Right ventricle myocardium inferior (tissue), 1 donor: ENCODE measurements at regions of chr10 and their contacts with region 1.

Region 1: GRCh38 chr10:110918643-110919363 is at the start of gene BBIP1:
- DNase-seq: no peak
- ATAC-seq: peak; percentile 97
- total RNA-seq, gene BBIP1: 19.0 TPM

Region 2: GRCh38 chr10:109427411-109427810 is 1491.4 kb before region 1 on chr10:
- intact Hi-C with region 1: no loop called
- DNase-seq: no peak
- ATAC-seq: no peak

Region 3: DNA sequence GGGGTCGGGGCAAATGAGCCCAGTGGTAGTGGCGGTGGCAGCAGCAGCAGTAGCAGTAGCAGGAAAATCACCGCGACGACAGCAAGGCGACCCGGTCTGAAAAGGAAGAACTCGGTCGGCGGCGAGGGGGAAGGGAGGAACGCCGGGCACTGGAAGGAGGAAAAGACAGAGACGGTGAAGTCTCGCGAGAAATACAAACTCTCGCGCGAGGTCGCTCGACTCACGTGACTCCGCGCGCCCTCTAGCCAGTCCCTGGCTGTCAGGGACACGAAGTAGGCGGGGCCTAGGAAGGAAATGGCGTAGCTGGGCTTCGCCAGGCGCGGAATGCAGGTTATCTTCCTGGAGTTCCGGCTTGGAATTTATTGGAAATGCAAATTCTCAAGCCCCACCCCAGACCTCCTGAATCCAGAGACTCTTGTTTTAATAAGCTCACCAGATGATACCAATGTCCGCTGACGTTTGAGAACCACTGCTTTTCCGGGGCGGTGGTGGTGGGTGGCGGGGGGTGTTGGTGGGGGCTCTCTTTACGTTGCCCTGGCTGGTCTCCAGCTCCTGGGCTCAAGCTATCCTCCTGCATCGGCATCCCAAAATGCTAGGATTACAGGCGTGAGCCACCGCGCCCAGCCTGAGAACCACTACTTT is 613.9 kb before region 1 on chr10 and contains the start of gene SMNDC1:
- intact Hi-C with region 1: loop called (anchors 10 kb)
- DNase-seq: peak; percentile 98
- ATAC-seq: peak; percentile 96
- total RNA-seq, gene SMNDC1: 27.6 TPM

Region 4: GRCh38 chr10:110871298-110872084 is 47.3 kb before region 1 on chr10 and contains the start of gene PDCD4:
- intact Hi-C with region 1: loop called (anchors 2 kb)
- DNase-seq: peak; percentile 100
- ATAC-seq: peak; percentile 96
- total RNA-seq, gene PDCD4: 71.6 TPM

Region 5: DNA sequence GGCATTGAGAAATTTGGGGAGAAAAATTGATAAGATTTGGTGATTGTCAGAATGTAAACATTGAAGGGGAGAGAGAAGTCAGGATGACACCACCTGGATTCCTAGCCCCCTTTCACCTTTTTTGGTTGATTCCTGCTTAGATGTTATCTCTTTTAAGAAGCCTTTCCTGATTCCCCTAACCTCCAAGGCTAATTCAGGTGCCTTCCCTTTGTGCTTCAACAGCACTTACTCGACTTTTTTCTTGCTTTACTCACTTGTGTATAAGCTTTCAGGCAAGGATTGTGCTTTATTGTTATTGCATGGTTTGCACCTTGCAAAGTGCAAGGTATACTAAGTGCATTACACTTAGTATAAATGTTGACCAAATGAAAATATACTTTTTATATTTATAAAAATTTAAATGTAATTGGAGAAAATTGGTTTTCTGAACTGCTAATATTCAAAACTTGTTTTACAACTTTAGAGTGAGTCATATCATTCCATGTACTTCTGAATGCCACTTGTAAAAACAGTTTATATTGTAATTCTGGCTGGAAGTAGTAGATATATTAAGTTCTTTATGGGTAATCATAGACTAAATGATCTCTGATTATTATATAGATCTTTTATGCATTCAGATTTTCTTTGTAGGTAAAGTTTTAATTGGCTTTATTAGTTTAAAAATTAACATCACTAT is 13.8 kb after region 1 on chr10:
- intact Hi-C with region 1: no loop called
- DNase-seq: no peak
- ATAC-seq: no peak

Region 6: GRCh38 chr10:110973400-110973799 is 54.6 kb after region 1 on chr10:
- intact Hi-C with region 1: loop called (anchors 5 kb)
- DNase-seq: no peak
- ATAC-seq: no peak

Region 7: GRCh38 chr10:110993024-110993693 is 74.4 kb after region 1 on chr10:
- intact Hi-C with region 1: no loop called
- DNase-seq: no peak
- ATAC-seq: no peak